ENCODE measurements at regions of chr3 and their contacts with region 1.

Region 1: DNA sequence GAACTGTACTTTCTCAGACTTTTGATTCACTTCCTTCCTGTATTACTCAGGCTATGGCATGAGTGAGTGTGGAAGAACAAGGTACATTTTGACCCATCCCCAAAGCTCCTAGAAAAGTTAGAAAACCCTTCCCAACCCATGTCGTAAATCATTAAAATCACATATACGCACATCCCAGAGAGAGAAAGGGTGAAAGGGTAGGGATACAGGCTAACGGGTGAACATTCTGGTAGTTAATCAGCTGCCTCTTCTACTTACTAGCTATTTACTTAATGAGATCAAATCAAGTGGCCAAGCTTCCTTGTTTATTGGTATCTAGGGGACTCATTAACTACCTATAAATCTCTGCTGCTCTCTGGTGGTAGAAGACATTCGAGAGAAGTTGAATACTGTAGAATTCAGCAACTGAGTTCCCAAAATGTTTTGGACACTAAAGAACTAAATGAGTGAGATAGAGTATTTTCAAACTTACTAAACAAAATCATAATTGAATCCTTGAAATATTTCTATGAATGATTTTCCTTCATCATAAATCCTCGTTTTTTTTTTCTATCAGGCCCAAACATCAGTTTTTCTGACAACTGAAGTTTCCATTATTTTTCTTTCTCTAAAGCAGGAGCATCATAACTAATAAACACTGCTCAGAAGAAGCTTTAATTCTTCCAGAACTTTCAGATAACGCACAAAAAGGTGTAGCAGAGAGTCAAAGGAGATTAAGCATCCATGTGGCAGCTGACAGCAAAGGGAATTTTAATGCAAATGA is 124.2 kb downstream of the IMPG2 start:
- DNase-seq: peak; percentile 18 to 82
- H3K4me3 ChIP-seq: no peak overlapping the region
- H3K27ac ChIP-seq: no peak overlapping the region
- H3K4me1 ChIP-seq: peaks cover 19% of the 10 kb centered on the region
- H3K27me3 ChIP-seq: no peaks in the 10 kb centered on the region
- CTCF ChIP-seq: peak; percentile 96

Region 2: DNA sequence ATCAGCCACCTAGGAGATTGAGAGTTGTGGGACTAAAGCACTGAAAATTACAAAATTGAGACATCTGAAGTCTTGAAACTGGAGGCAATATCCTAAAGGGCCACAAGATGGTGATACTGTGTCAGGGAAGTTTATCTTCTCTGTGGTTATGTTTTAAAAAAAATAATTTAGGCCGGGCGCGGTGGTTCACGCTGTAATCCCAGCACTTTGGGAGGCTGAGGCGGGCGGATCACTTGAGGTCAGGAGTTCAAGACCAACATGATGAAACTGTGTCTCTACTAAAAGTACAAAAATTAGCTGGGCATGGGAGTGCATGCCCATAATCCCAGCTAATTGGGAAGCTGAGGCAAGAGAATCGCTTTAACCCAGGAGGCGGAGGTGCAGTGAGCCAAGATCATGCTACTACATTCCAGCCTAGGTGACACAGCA is 879.5 kb before region 1 on chr3:
- CTCF ChIA-PET with region 1: no interaction called
- POLR2A ChIA-PET with region 1: no interaction called
- intact Hi-C with region 1: loop called (anchors 5 kb)
- DNase-seq: peak; percentile 33 to 59
- H3K4me3 ChIP-seq: no peak overlapping the region
- H3K27ac ChIP-seq: no peak overlapping the region
- H3K4me1 ChIP-seq: no peaks in the 10 kb centered on the region
- H3K27me3 ChIP-seq: no peaks in the 10 kb centered on the region
- CTCF ChIP-seq: peak; percentile 93

Region 3: GRCh38 chr3:100603469-100603868 is 592.7 kb before region 1 on chr3:
- CTCF ChIA-PET with region 1: interaction called, 4 read pairs
- POLR2A ChIA-PET with region 1: no interaction called
- intact Hi-C with region 1: loop called (anchors 2 kb)
- DNase-seq: peak; percentile 41 to 60
- H3K4me3 ChIP-seq: no peak overlapping the region
- H3K27ac ChIP-seq: no peak overlapping the region
- H3K4me1 ChIP-seq: peaks cover 14% of the 10 kb centered on the region
- H3K27me3 ChIP-seq: no peaks in the 10 kb centered on the region
- CTCF ChIP-seq: peak; percentile 77

Region 4: GRCh38 chr3:100754563-100755334 is 441.4 kb before region 1 on chr3:
- CTCF ChIA-PET with region 1: interaction called, 6 read pairs
- POLR2A ChIA-PET with region 1: no interaction called
- intact Hi-C with region 1: loop called (anchors 5 kb)
- DNase-seq: no peak
- H3K4me3 ChIP-seq: no peak overlapping the region
- H3K27ac ChIP-seq: no peak overlapping the region
- H3K4me1 ChIP-seq: no peaks in the 10 kb centered on the region
- H3K27me3 ChIP-seq: no peaks in the 10 kb centered on the region
- CTCF ChIP-seq: peak; percentile 42; the same call in 1 of the 2 replicates

Region 5: DNA sequence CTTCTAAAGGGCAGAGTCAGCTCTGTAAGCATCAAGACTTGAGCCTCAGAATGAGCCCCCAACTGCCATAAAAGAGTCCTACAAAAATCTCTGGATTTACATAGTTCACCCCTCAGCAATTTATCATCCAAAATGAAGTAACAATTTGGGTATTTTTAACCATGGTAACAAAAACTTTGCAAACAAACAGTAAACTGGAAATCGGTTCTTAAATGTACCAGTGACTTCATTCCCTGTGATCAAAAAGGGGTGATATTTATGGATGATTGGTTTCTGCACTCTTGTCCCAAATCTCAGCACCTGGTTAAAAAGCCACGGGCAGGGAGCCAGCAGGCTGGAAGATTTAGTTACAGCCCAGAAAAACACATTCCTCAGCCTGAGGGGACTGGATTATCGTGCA is 413.2 kb before region 1 on chr3:
- CTCF ChIA-PET with region 1: no interaction called
- POLR2A ChIA-PET with region 1: no interaction called
- intact Hi-C with region 1: no loop called
- DNase-seq: no peak
- H3K4me3 ChIP-seq: no peak overlapping the region
- H3K27ac ChIP-seq: no peak overlapping the region
- H3K4me1 ChIP-seq: no peaks in the 10 kb centered on the region
- H3K27me3 ChIP-seq: no peaks in the 10 kb centered on the region
- CTCF ChIP-seq: no peak

Region 6: DNA sequence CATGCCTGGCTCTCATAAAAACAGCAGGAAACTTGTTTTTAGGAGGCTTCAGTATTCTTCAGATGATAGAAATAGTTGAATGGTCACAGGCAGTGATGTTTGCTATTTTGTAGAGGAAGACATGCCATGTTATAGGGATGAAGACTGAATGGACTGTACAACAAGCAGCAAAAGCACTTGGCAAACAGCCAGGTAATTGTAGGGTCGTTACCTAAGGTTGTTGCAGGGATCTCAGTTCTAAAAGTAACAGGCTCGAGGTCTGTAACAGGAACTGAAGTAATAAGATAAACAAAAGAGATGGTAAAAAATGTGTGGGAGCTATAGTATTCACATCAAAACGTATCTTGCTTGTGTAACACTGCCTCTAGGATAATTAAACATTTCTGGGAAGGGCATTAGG is 370.6 kb before region 1 on chr3:
- CTCF ChIA-PET with region 1: no interaction called
- POLR2A ChIA-PET with region 1: no interaction called
- intact Hi-C with region 1: loop called (anchors 1 kb)
- DNase-seq: no peak
- H3K4me3 ChIP-seq: no peak overlapping the region
- H3K27ac ChIP-seq: no peak overlapping the region
- H3K4me1 ChIP-seq: no peaks in the 10 kb centered on the region
- H3K27me3 ChIP-seq: 0 out of 2 replicates have a peak, but pooled peaks cover 3% of the 10 kb centered on the region
- CTCF ChIP-seq: no peak

Region 7: GRCh38 chr3:100993309-100993708 is 202.8 kb before region 1 on chr3 and contains the start of gene ABI3BP:
- CTCF ChIA-PET with region 1: no interaction called
- POLR2A ChIA-PET with region 1: no interaction called
- intact Hi-C with region 1: loop called (anchors 5 kb)
- DNase-seq: peak in 1 of 2 experiments; percentile 60
- H3K4me3 ChIP-seq: no peak within 1 kb of the TSS
- H3K27ac ChIP-seq: no peak within 1 kb of the TSS
- H3K4me1 ChIP-seq: no peaks in the 10 kb centered on the region
- H3K27me3 ChIP-seq: no peaks in the 10 kb centered on the region
- CTCF ChIP-seq: no peak
- total RNA-seq, gene ABI3BP: 3.4 and 4.2 TPM in 2 replicates

Region 8: DNA sequence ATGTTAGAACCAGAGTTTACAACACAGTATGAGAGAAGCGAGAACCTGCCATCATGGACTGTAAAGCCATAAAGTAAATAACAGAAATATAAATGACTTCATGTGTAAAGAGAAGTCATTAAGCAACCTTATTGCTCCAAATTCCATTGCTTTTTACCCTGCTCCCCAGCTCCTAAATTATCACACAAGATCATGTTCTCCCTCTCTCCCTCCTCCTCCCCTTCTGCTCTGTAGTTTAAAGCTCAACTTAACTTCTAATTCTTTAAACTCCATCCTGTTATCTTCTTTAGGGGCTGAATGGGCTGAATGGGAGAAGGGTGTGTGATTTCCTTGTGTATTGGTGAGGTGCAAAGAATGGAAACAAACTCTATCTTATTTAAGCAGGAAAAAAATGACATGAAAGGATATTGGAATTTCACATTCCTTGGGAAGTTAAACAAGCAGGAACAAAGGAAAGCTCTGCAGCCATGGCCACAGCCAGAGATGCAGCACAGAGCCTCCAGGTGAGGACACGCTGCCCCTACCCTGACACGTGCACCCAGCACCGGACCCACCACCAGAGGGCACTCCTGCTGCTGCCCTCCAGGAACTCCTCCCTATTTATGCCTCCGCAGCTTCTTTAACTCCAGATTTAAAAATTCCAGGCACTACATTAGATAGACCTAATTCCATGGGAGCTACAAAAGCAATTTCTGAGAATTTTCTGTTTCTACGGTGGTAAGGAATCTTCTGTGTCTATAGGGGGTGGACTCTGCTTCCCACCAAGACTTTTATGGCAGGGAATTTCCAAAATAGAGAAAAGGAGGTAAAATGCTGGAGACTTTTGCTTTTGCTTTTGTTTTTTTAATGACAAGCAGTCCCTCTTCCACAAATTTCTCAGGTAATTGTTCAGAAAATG is 126.0 kb before region 1 on chr3:
- CTCF ChIA-PET with region 1: interaction called, 4 read pairs
- POLR2A ChIA-PET with region 1: interaction called, 6 read pairs
- intact Hi-C with region 1: loop called (anchors 2 kb)
- DNase-seq: peak in 1 of 2 experiments; percentile 53
- H3K4me3 ChIP-seq: no peak overlapping the region
- H3K27ac ChIP-seq: no peak overlapping the region
- H3K4me1 ChIP-seq: peaks cover 27% of the 10 kb centered on the region
- H3K27me3 ChIP-seq: no peaks in the 10 kb centered on the region
- CTCF ChIP-seq: peak; percentile 69

Region 9: GRCh38 chr3:101325393-101326134 is 129.4 kb after region 1 on chr3:
- CTCF ChIA-PET with region 1: no interaction called
- POLR2A ChIA-PET with region 1: no interaction called
- intact Hi-C with region 1: no loop called
- DNase-seq: no peak
- H3K4me3 ChIP-seq: no peak overlapping the region
- H3K27ac ChIP-seq: no peak overlapping the region
- H3K4me1 ChIP-seq: no peaks in the 10 kb centered on the region
- H3K27me3 ChIP-seq: no peaks in the 10 kb centered on the region
- CTCF ChIP-seq: no peak

Measured in PC-9 (cell line).